ENCODE measurements at regions of chr1 and their contacts with region 1.

Region 1: DNA sequence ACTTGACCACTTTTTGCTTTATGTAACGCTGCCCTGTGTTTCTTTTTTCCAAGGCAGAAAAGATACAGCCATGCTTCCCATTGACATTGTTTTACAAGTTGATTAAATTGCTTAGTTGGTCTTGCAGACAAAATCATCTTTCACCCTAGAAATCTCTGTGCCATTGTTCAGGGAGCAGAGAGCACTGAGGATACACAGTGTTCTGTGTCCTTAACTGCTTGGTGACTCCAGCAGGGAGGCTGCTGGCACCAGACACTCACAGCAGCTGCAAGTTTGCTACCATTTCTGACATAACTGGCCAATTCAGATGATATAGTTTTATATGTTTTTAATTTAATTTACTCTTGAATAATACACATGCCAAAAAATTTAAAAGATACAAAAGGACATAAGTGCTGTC is 118.7 kb downstream of the RGS2 start:
- DNase-seq: no peak
- H3K4me3 ChIP-seq: no peak overlapping the region
- H3K27ac ChIP-seq: no peak overlapping the region
- H3K4me1 ChIP-seq: no peaks in the 10 kb centered on the region
- H3K27me3 ChIP-seq: no peaks in the 10 kb centered on the region
- CTCF ChIP-seq: no peak
- POLR2A ChIP-seq: no peak

Region 2: DNA sequence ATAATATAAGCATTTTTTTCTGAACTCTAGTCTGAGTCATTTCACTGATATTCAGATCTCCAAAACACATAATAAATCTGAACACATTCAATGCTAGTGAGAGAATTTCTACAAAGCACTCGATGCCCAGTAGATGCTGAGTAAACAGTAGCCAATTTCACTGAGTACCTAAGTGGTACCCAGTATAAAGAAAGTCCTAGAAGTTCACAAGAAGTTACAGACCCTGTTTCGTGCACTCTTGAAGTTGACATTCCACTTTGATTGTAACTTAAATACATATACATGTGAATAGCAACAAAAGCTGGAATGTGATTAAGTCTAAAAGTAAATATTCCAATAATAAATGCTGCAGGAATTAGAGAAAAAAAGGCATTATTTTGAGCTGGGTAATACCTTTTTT is 151.9 kb before region 1 on chr1:
- CTCF ChIA-PET with region 1: no interaction called
- POLR2A ChIA-PET with region 1: no interaction called
- dilution Hi-C with region 1: no loop called
- intact Hi-C with region 1: no loop called
- DNase-seq: no peak
- H3K4me3 ChIP-seq: no peak overlapping the region
- H3K27ac ChIP-seq: no peak overlapping the region
- H3K4me1 ChIP-seq: no peaks in the 10 kb centered on the region
- H3K27me3 ChIP-seq: no peaks in the 10 kb centered on the region
- CTCF ChIP-seq: no peak
- POLR2A ChIP-seq: no peak

Region 3: DNA sequence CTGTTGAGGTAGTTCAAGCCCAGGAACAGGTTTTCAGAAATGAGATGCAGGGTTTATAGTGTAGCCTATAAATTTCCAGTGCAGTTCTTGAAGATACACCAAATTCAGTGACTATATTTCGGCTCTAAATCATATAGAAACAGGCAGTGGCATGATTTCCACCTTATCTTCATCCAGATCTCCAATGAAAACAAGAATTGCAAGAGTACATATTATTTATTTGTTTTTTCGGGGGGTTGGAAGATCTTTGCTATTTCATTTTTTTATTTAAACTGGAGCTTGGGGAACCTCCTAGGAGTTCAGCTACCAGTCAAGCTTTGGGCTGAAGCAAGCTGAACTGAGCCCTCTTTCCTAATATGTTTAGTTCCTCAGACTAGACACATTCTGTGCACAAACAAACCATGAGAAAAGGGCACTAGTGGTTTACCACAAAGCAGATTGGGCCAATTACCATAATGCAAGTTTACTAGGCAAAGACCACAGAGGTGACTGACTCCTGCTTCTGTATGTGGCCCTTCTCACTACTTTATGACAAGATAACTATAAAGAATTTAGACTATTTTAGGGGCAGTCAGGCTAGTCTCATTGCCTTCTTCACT is 50.1 kb before region 1 on chr1:
- CTCF ChIA-PET with region 1: no interaction called
- POLR2A ChIA-PET with region 1: no interaction called
- dilution Hi-C with region 1: no loop called
- intact Hi-C with region 1: loop called (anchors 10 kb)
- DNase-seq: no peak
- H3K4me3 ChIP-seq: no peak overlapping the region
- H3K27ac ChIP-seq: no peak overlapping the region
- H3K4me1 ChIP-seq: no peaks in the 10 kb centered on the region
- H3K27me3 ChIP-seq: no peaks in the 10 kb centered on the region
- CTCF ChIP-seq: no peak
- POLR2A ChIP-seq: no peak

Region 4: GRCh38 chr1:192901500-192901899 is 26.0 kb before region 1 on chr1:
- CTCF ChIA-PET with region 1: no interaction called
- POLR2A ChIA-PET with region 1: no interaction called
- dilution Hi-C with region 1: no loop called
- intact Hi-C with region 1: no loop called
- DNase-seq: no peak
- H3K4me3 ChIP-seq: no peak overlapping the region
- H3K27ac ChIP-seq: no peak overlapping the region
- H3K4me1 ChIP-seq: no peaks in the 10 kb centered on the region
- H3K27me3 ChIP-seq: no peaks in the 10 kb centered on the region
- CTCF ChIP-seq: no peak
- POLR2A ChIP-seq: no peak

Region 5: DNA sequence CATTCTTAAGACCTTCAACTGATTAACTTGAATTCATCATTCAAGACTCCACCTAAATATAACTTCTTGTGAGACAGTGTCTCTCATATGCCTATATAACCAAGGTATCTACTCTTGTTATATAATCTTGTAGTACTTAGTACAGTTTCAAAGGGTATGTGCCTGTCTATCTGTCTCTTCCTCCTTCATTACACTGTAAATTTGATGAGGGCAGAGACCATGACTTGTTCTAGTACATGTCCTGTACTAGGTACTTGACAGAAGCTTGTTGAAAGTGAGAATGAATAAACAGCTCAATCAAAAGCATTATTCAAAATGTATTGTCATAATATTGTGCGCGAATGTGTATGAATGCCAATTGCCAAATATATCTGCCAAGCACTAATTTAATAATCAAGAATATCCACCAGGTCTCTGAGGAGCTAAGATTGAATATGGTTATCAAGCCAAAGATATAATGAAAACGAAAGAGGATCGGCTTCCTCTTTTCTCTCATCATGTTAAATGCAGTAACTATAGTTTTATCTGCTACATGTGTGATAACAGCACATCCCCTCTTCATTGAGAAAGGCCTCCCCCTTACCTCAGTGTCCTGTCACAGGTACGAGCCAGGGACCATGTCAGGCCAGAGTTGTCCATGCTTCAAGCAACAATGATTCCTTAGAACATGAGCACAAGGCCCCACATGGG is 14.4 kb after region 1 on chr1:
- CTCF ChIA-PET with region 1: no interaction called
- POLR2A ChIA-PET with region 1: no interaction called
- dilution Hi-C with region 1: no loop called
- intact Hi-C with region 1: no loop called
- DNase-seq: no peak
- H3K4me3 ChIP-seq: no peak overlapping the region
- H3K27ac ChIP-seq: no peak overlapping the region
- H3K4me1 ChIP-seq: peaks cover 9% of the 10 kb centered on the region
- H3K27me3 ChIP-seq: no peaks in the 10 kb centered on the region
- CTCF ChIP-seq: no peak
- POLR2A ChIP-seq: no peak

Measured in endothelial cell of umbilical vein (primary cell).